ENCODE measurements at regions of chr1 and their contacts with region 1.

Region 1: GRCh38 chr1:226882631-226883409 is 12.4 kb downstream of the PSEN2 start:
- DNase-seq: peak; percentile 54
- H3K4me3 Mint-ChIP-seq: peak overlapping the region; percentile 51
- H3K27ac Mint-ChIP-seq: peak overlapping the region; percentile 91
- H3K4me1 Mint-ChIP-seq: peaks cover 60% of the 10 kb centered on the region
- H3K27me3 Mint-ChIP-seq: no peaks in the 10 kb centered on the region

Region 2: GRCh38 chr1:226870401-226871279 is 12.2 kb before region 1 on chr1 and contains the start of gene PSEN2:
- CTCF ChIA-PET with region 1: interaction called, 12 read pairs
- POLR2A ChIA-PET with region 1: no interaction called
- DNase-seq: peak; percentile 52
- H3K4me3 Mint-ChIP-seq: peak within 1 kb of the TSS; percentile 73
- H3K27ac Mint-ChIP-seq: no peak within 1 kb of the TSS
- H3K4me1 Mint-ChIP-seq: peaks cover 16% of the 10 kb centered on the region
- H3K27me3 Mint-ChIP-seq: peaks cover 38% of the 10 kb centered on the region
- total RNA-seq, gene PSEN2: 2.0 to 2.9 TPM